Heart right ventricle (tissue), 16 donors: ENCODE measurements at regions of chr2 and their contacts with region 1.

Region 1: DNA sequence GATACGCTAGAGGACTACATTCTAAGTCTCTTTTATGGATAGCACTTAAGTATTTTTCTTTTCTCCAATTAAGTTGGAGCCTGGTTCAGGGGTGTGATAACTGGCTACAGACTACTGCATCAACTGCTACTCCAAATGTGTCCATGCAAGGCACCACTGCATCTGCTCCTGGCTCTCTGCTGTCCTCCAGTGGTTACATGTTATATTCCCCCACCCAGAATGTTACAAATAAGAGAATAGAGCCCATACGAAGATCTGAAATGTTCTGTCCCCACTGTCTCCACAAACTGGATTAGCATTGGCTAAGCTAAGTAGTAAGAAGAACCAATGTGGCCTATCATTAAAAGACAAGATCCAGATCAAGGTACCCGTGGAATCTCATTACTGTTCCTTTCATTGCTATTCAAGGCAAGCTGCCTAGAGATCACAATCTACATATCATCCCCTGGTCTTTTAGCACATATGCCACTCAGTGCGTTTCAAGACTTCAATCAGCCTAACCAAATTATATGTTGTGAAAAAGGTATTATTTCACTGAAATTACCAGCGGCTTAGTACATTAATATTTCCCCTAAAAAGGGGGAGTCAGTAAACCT is 308.3 kb upstream of the SLC8A1 start:
- DNase-seq: peak; percentile 8 to 38
- ATAC-seq: peak; percentile 51 to 89 (median 84)
- H3K4me3 ChIP-seq: no peak overlapping the region
- H3K27ac ChIP-seq: no peak overlapping the region
- H3K4me1 ChIP-seq: peaks cover 0 to 19% (median 6%) of the 10 kb centered on the region in 9 donors
- H3K27me3 ChIP-seq: no peaks in the 10 kb centered on the region
- CTCF ChIP-seq: peak; percentile 44 to 80 (median 67)

Region 2: DNA sequence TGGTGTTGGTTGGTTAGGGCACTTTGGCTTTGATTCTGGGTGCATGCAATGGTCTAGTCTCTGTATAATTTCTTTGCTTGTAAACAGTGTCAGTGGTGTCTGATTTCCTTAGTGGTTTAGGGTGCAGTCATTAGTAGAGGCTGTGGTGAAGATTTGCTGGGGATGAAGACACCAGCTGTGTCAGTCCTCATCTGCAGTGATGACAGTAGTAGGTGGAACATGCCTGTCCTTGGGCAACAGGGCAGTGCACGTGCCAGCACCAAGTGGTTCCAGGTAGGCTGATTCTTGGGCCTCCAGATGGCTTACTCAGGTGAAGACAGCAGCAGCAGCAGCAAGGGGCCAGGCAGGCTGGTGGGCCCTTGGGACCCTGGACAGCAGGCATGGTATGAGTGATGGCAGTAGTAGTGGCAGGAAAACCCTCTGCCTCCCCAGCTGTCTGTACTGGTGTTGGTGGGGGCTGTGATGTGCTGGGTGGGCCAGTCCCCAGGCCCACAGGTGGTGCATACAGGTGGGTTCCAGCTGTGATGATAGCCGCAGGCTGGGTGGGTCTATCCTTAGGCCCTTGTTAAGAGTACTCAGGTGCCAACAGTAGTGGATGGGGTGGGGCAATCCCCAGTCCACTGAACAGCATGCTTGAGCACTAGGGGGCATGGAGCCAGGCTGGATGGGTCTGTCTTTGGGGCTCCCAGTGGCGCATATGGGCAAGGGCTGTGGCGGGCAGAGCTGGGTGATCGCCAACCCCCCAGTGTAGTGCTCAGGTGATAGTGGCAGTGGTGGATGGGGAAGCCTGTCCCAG is 840.5 kb before region 1 on chr2:
- intact Hi-C with region 1: loop called in 7 of 10 experiments (anchors 5 to 10 kb)
- DNase-seq: no peak
- ATAC-seq: peak in 1 of 8 donors; percentile 50
- H3K4me3 ChIP-seq: no peak overlapping the region
- H3K27ac ChIP-seq: no peak overlapping the region
- H3K4me1 ChIP-seq: peaks cover 0 to 6% (median 0%) of the 10 kb centered on the region in 9 donors
- H3K27me3 ChIP-seq: no peaks in the 10 kb centered on the region
- CTCF ChIP-seq: no peak